Heart right ventricle (tissue), 16 donors: ENCODE measurements at regions of chr1 and their contacts with region 1.

Region 1: GRCh38 chr1:26102526-26102925 is 9.1 kb upstream of the PDIK1L start:
- DNase-seq: no peak
- ATAC-seq: no peak
- H3K4me3 ChIP-seq: no peak overlapping the region
- H3K27ac ChIP-seq: no peak overlapping the region
- H3K4me1 ChIP-seq: peaks cover 0 to 16% (median 5%) of the 10 kb centered on the region in 9 donors
- H3K27me3 ChIP-seq: no peaks in the 10 kb centered on the region
- CTCF ChIP-seq: no peak

Region 2: GRCh38 chr1:26035959-26036755 is 66.4 kb before region 1 on chr1:
- intact Hi-C with region 1: loop called in 4 of 10 experiments (anchors 2 to 5 kb)
- DNase-seq: peak; percentile 83 to 87
- ATAC-seq: peak; percentile 80 to 95 (median 90)
- H3K4me3 ChIP-seq: peak overlapping the region; percentile 75 to 94 (median 84)
- H3K27ac ChIP-seq: peak overlapping the region; percentile 83 to 96 (median 92)
- H3K4me1 ChIP-seq: peaks cover 7 to 38% (median 17%) of the 10 kb centered on the region in 9 donors
- H3K27me3 ChIP-seq: peaks cover 0 to 15% (median 0%) of the 10 kb centered on the region in 7 donors
- CTCF ChIP-seq: peak; percentile 98 to 100 (median 100)

Region 3: GRCh38 chr1:26161415-26162219 is 59.1 kb after region 1 on chr1:
- intact Hi-C with region 1: loop called in 2 of 10 experiments (anchors 2 to 5 kb)
- DNase-seq: peak; percentile 60 to 79
- ATAC-seq: peak; percentile 19 to 65 (median 48)
- H3K4me3 ChIP-seq: peak overlapping the region; percentile 29 to 70 (median 60)
- H3K27ac ChIP-seq: peak overlapping the region; percentile 85 to 97 (median 93)
- H3K4me1 ChIP-seq: peaks cover 27 to 76% (median 58%) of the 10 kb centered on the region in 9 donors
- H3K27me3 ChIP-seq: peaks cover 0 to 66% (median 0%) of the 10 kb centered on the region in 7 donors
- CTCF ChIP-seq: peak in 5 of 9 donors; percentile 13 to 53 (median 41)

Region 4: GRCh38 chr1:26233903-26234643 is 131.5 kb after region 1 on chr1 and contains the start of gene CEP85:
- intact Hi-C with region 1: loop called in 6 of 10 experiments (anchors 2 to 10 kb)
- DNase-seq: peak; percentile 97 to 99
- ATAC-seq: peak; percentile 99 to 100 (median 99)
- H3K4me3 ChIP-seq: peak within 1 kb of the TSS; percentile 62 to 93 (median 72)
- H3K27ac ChIP-seq: peak within 1 kb of the TSS; percentile 69 to 94 (median 89)
- H3K4me1 ChIP-seq: peaks cover 0 to 42% (median 14%) of the 10 kb centered on the region in 9 donors
- H3K27me3 ChIP-seq: no peaks in the 10 kb centered on the region
- CTCF ChIP-seq: peak; percentile 69 to 95 (median 85)
- total RNA-seq, gene CEP85: 29.9 to 74.5 (median 53.8) TPM

Region 5: DNA sequence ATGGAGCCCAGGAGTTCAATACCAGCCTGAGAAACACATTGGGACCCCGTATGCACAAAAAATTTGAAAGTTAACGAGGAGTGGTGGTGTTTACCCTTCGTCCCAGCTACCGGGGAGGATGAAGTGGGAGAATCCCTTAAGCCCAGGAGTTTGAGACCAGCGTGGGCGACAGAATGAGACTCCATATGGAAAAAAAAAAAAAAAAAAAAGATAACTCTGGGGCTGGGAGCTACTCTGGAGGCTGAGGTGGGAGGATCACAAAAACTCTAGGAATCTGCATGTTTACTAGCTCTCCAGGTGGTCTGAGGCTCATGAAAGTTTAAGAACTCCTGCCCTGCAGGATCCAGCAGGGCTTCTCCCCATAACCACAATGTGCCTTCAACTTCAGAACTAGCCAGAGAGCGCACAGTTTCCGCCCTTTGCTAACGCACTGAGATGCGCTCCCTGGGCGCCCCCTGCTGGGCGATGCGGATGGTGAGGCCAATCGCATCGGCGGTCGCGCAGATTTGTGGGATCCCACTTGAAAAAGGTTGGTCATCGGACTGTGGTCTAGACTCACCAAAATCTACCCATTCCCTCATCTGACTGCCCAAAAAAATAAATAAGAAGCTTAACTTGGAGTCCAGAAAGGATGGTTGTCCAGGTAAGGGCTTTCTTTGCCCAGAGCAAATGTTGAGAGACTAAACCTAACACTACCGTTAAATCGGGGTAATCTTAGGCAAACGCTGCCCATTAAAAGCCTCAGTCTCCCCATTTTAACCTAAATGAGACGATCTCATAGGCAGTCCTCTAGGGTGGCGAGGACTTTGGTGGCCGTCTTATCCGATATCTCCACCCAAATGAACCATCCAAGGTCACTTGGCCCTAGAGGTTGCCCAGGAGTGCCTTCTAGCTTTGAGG is 261.3 kb after region 1 on chr1:
- intact Hi-C with region 1: loop called in 2 of 10 experiments (anchors 5 kb)
- DNase-seq: peak; percentile 75 to 77
- ATAC-seq: peak in 5 of 8 donors; percentile 66 to 86 (median 81)
- H3K4me3 ChIP-seq: no peak overlapping the region
- H3K27ac ChIP-seq: no peak overlapping the region
- H3K4me1 ChIP-seq: peaks cover 0 to 21% (median 10%) of the 10 kb centered on the region in 9 donors
- H3K27me3 ChIP-seq: peaks cover 16 to 89% (median 57%) of the 10 kb centered on the region in 7 donors
- CTCF ChIP-seq: peak; percentile 72 to 96 (median 90)